ENCODE measurements at regions of chr1 and their contacts with region 1.

Region 1: DNA sequence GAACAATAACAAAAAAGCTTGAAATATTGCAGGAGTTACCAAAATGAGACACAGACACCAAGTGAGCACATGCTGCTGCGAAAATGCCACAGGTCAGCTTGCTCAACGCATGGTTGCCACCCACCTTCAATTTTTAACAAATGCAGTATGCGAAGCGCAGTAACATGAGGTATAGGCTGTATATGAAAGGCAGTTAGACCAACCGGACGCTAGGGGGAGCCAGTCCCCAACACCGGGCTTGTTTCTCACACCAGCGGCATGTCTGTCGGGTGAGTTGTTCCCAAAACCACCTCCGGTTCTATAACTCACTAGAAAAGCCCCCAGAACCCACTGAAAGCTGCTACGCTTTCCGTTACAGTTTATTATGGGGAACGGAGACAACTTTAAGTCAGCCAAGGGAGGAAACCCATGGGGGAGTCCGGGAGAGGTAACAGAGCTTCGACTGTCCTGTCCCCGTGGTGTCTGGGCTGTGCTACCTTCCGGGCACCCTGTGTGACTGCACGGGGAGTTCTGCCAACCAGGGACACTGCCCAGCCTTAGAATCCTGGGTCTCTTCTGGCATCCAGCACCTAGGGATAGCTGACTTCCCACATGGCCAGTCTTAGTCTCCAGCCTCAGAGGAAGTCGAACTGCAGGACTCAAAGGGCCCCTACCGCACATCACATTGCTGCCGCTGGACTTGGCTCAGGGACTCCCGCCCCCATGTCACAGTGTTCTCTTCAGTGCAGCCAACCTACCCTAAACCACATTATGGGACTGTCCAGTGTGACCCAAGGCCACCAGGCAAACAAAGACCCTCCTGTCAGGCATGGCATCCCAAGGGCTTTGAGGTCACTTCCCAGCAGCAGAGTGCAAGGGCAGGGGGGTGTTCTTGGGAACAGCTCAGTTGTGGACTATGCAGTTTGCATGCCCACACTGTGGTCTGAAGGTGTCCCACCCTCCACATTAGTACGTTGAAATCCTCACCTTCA is 14.0 kb downstream of the RNF187 start:
- DNase-seq: peak; percentile 77
- H3K4me3 Mint-ChIP-seq: peak overlapping the region; percentile 74
- H3K27ac Mint-ChIP-seq: no peak overlapping the region
- H3K4me1 Mint-ChIP-seq: peaks cover 26% of the 10 kb centered on the region
- H3K27me3 Mint-ChIP-seq: peaks cover 7% of the 10 kb centered on the region

Region 2: GRCh38 chr1:228275739-228276421 is 225.3 kb before region 1 on chr1:
- intact Hi-C with region 1: loop called (anchors 5 kb)
- DNase-seq: peak; percentile 83
- H3K4me3 Mint-ChIP-seq: peak overlapping the region; percentile 73
- H3K27ac Mint-ChIP-seq: no peak overlapping the region
- H3K4me1 Mint-ChIP-seq: peaks cover 8% of the 10 kb centered on the region
- H3K27me3 Mint-ChIP-seq: no peaks in the 10 kb centered on the region

Region 3: DNA sequence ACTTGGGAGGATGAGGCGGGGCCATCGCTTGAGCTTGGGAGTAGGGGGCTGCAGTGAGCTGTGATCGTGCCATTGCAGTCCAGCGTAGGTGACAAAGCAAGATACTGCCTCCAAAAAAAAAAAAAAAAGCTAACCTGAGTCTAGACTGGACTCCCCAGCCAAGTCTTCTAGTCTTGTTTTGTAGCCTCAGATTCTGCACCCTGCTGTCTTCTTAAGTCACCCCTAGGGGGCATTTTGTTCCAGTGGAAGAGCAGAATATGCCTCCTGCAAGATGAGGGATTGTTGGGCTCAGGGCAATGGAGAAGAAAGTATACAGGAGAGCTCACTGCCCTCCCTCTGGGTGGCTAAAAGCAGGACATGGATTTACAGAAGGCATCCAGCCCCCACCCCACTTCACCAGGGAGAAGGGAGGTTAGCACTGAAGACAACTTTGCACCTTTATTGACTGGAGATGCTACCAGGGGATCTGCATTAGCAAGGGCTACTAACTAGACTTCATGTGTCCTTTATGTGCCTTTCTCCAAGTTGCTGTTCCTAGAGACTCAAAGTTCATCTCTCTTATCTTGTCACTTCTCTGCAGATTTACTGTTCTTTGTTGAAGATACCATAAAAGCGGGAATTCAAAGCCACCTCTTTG is 29.3 kb before region 1 on chr1:
- intact Hi-C with region 1: loop called (anchors 2 kb)
- DNase-seq: no peak
- H3K4me3 Mint-ChIP-seq: no peak overlapping the region
- H3K27ac Mint-ChIP-seq: peak overlapping the region; percentile 14
- H3K4me1 Mint-ChIP-seq: peaks cover 33% of the 10 kb centered on the region
- H3K27me3 Mint-ChIP-seq: peaks cover 18% of the 10 kb centered on the region

Region 4: GRCh38 chr1:228515200-228515834 is 14.1 kb after region 1 on chr1:
- intact Hi-C with region 1: loop called (anchors 1 kb)
- DNase-seq: no peak
- H3K4me3 Mint-ChIP-seq: no peak overlapping the region
- H3K27ac Mint-ChIP-seq: no peak overlapping the region
- H3K4me1 Mint-ChIP-seq: peaks cover 6% of the 10 kb centered on the region
- H3K27me3 Mint-ChIP-seq: peaks cover 19% of the 10 kb centered on the region